Natural killer cell (primary cell): ENCODE measurements at regions of chr6 and their contacts with region 1.

Region 1: GRCh38 chr6:144343701-144344428 is 58.7 kb downstream of the UTRN start:
- DNase-seq: peak; percentile 44 to 81
- ATAC-seq: peak; percentile 75 to 82 (median 79)
- H3K4me3 ChIP-seq: peak overlapping the region; percentile 57
- H3K4me3 Mint-ChIP-seq: peak overlapping the region; percentile 98
- H3K27ac ChIP-seq: peak overlapping the region; percentile 83
- H3K27ac Mint-ChIP-seq: peak overlapping the region; percentile 90 to 99
- H3K4me1 ChIP-seq: peaks cover 58% of the 10 kb centered on the region
- H3K4me1 Mint-ChIP-seq: peaks cover 82 to 89% of the 10 kb centered on the region in 2 donors
- H3K27me3 ChIP-seq: no peaks in the 10 kb centered on the region
- H3K27me3 Mint-ChIP-seq: no peaks in the 10 kb centered on the region
- CTCF ChIP-seq: no peak

Region 2: DNA sequence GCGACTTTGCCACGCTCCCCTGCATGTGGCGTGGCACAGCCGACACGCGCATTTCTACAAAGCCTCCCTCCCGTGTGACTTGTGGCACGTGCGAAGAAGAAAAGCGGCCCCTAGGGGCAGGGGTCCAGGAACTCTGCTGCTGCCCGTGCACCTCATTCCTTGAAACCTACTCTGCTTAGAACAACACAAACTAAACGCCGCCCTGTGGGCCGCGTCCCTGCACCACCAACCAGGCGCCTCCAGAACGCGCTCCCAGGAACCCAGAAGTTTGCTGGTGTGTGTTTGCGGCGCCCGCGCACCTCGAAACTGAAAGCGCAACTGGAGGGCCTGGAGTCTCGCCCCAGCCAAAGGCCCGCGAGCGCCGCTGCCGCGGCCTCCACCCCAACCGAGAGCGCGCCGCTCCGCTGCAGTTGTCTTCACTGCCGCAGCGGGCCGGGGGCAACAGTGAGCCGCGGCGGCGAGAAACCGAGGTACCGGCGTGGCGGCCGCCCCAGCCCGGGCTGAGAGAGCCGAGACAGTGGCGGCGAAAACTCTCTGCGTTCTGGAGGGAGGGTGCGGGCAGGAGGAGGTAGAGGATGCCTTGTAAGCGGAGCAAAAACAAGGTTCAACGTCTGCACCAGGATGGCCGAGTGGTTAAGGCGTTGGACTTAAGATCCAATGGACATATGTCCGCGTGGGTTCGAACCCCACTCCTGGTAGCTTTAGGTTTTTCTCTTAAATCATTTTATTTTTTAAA is 127.8 kb before region 1 on chr6:
- intact Hi-C with region 1: loop called (anchors 5 kb)
- DNase-seq: peak; percentile 91 to 96
- ATAC-seq: peak; percentile 84 to 93 (median 86)
- H3K4me3 ChIP-seq: peak overlapping the region; percentile 78
- H3K4me3 Mint-ChIP-seq: peak overlapping the region; percentile 97
- H3K27ac ChIP-seq: peak overlapping the region; percentile 84
- H3K27ac Mint-ChIP-seq: peak overlapping the region; percentile 97 to 100
- H3K4me1 ChIP-seq: peaks cover 24% of the 10 kb centered on the region
- H3K4me1 Mint-ChIP-seq: peaks cover 37 to 40% of the 10 kb centered on the region in 2 donors
- H3K27me3 ChIP-seq: no peaks in the 10 kb centered on the region
- H3K27me3 Mint-ChIP-seq: peaks cover 8 to 10% of the 10 kb centered on the region in 2 donors
- CTCF ChIP-seq: peak; percentile 48

Region 3: DNA sequence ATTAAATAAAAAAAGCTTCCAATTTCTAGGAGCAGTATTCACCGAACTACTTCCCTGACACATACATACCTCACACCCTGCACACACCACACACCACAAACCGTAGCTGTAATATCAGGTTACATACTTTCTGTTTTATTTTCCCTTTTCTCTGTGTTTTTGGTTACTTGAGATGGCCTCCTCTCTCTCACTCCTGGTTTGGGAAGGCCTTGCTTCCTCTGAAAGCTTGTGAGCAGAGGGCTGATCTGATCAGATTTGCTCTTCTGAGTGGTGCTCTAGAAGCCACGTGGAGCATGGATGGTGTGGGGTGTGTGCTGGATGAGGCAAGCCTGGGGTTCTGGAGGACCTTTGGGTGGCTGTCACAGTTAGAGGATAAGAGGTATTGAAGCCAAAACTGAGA is 37.9 kb before region 1 on chr6:
- intact Hi-C with region 1: loop called (anchors 2 kb)
- DNase-seq: peak; percentile 54 to 74
- ATAC-seq: peak; percentile 66 to 82 (median 77)
- H3K4me3 ChIP-seq: no peak overlapping the region
- H3K4me3 Mint-ChIP-seq: peak overlapping the region; percentile 85
- H3K27ac ChIP-seq: peak overlapping the region; percentile 80
- H3K27ac Mint-ChIP-seq: peak overlapping the region; percentile 89 to 95
- H3K4me1 ChIP-seq: peaks cover 35% of the 10 kb centered on the region
- H3K4me1 Mint-ChIP-seq: peaks cover 72 to 73% of the 10 kb centered on the region in 2 donors
- H3K27me3 ChIP-seq: no peaks in the 10 kb centered on the region
- H3K27me3 Mint-ChIP-seq: no peaks in the 10 kb centered on the region
- CTCF ChIP-seq: no peak

Region 4: GRCh38 chr6:144315981-144316861 is 27.6 kb before region 1 on chr6:
- intact Hi-C with region 1: no loop called
- DNase-seq: no peak
- ATAC-seq: no peak
- H3K4me3 ChIP-seq: no peak overlapping the region
- H3K4me3 Mint-ChIP-seq: no peak overlapping the region
- H3K27ac ChIP-seq: no peak overlapping the region
- H3K27ac Mint-ChIP-seq: peak overlapping the region; percentile 80 to 84
- H3K4me1 ChIP-seq: peaks cover 22% of the 10 kb centered on the region
- H3K4me1 Mint-ChIP-seq: peaks cover 42 to 47% of the 10 kb centered on the region in 2 donors
- H3K27me3 ChIP-seq: no peaks in the 10 kb centered on the region
- H3K27me3 Mint-ChIP-seq: no peaks in the 10 kb centered on the region
- CTCF ChIP-seq: no peak

Region 5: DNA sequence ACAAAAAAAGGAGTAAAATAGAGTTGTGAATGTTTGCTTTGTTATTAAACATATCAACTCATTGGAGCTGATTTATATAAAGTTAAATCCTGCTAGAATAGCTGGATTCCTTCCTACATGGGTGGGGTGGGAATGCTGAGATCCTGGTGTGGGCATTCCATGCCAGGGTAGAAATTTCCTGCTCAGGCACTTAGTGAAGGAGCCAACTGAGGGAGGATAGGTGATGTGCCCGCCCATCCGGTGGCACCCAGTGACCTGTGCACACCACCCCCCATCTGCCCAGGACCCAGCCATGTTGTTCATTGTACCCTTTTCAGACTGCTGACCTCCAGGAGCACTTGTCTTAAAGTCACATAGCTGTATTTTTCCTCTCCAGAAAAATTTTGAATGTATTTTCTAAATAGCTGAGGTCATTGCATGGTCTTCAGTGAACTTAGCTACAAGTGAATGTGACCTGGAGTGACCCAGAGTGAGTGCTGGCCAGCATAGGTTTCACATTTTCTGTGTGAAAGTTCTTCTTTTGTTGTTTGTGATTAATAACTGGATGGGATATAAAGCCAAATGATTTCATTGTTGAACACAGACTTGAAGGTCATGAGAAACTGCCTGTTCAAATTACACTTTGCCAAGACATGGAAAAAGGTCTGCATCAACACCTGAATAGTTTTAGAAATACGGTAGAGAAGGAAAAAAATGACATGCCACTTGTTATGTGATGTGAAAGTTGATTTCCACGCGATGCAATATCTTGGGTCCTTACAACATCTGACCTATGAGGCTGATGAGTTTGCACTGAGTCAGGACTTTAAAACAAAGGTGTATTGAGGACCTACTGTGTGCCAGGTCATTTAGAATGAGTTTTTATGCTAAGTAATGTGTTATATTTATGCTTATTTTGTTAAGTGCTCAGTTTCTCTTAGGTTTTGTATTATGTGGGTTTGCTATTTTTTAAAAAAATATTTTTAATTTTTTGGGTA is 18.5 kb after region 1 on chr6:
- intact Hi-C with region 1: loop called (anchors 2 kb)
- DNase-seq: no peak
- ATAC-seq: peak; percentile 31 to 56 (median 49)
- H3K4me3 ChIP-seq: no peak overlapping the region
- H3K4me3 Mint-ChIP-seq: peak overlapping the region; percentile 41
- H3K27ac ChIP-seq: peak overlapping the region; percentile 30
- H3K27ac Mint-ChIP-seq: peak overlapping the region; percentile 74 to 99
- H3K4me1 ChIP-seq: peaks cover 39% of the 10 kb centered on the region
- H3K4me1 Mint-ChIP-seq: peaks cover 89 to 90% of the 10 kb centered on the region in 2 donors
- H3K27me3 ChIP-seq: no peaks in the 10 kb centered on the region
- H3K27me3 Mint-ChIP-seq: no peaks in the 10 kb centered on the region
- CTCF ChIP-seq: no peak

Region 6: DNA sequence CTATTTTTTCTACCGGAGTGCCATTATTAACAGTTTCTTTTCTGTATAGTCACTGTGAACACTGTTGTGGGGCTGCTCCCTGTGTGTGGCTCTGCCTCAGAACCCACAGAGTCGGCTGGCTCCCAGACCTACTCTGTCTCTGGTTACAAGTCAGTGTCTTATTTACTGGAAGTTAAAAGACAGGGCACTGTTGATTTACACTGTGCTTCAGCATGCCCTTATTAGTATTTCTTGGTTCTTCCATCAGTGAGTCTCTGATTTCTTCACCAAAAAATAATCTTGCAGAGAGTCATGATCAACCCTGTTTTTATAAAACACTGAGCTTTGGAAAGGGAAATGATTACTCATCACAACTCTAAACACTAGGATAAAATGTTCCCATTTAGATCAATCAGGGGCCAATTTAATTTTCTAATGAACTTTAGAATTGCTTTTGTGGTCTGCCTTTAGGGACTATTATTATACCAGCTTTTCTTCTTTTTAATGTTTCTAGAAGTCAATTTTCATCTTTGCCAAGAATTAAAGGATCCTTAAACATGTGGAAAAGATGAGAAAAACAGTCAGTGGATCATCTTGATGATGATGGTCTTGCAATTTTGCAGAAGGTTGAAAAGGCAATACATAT is 33.8 kb after region 1 on chr6:
- intact Hi-C with region 1: loop called (anchors 5 kb)
- DNase-seq: no peak
- ATAC-seq: peak; percentile 61 to 76 (median 62)
- H3K4me3 ChIP-seq: no peak overlapping the region
- H3K4me3 Mint-ChIP-seq: peak overlapping the region; percentile 17
- H3K27ac ChIP-seq: no peak overlapping the region
- H3K27ac Mint-ChIP-seq: peak overlapping the region; percentile 21 to 81
- H3K4me1 ChIP-seq: peaks cover 41% of the 10 kb centered on the region
- H3K4me1 Mint-ChIP-seq: peaks cover 70 to 79% of the 10 kb centered on the region in 2 donors
- H3K27me3 ChIP-seq: no peaks in the 10 kb centered on the region
- H3K27me3 Mint-ChIP-seq: no peaks in the 10 kb centered on the region
- CTCF ChIP-seq: no peak